ENCODE measurements at regions of chr14 and their contacts with region 1.

Region 1: GRCh38 chr14:102738756-102739494 is 38.3 kb upstream of the TRAF3 start:
- DNase-seq: no peak
- ATAC-seq: no peak
- H3K4me3 ChIP-seq: no peak overlapping the region
- H3K27ac ChIP-seq: no peak overlapping the region
- H3K4me1 ChIP-seq: no peaks in the 10 kb centered on the region
- H3K27me3 ChIP-seq: no peaks in the 10 kb centered on the region
- CTCF ChIP-seq: no peak

Region 2: GRCh38 chr14:102645746-102646440 is 93.0 kb before region 1 on chr14:
- CTCF ChIA-PET with region 1: no interaction called
- POLR2A ChIA-PET with region 1: interaction called, 11 read pairs
- intact Hi-C with region 1: no loop called
- DNase-seq: no peak
- ATAC-seq: no peak
- H3K4me3 ChIP-seq: no peak overlapping the region
- H3K27ac ChIP-seq: no peak overlapping the region
- H3K4me1 ChIP-seq: peaks cover 5% of the 10 kb centered on the region; the same call in 1 of the 2 replicates
- H3K27me3 ChIP-seq: no peaks in the 10 kb centered on the region
- CTCF ChIP-seq: no peak

Region 3: DNA sequence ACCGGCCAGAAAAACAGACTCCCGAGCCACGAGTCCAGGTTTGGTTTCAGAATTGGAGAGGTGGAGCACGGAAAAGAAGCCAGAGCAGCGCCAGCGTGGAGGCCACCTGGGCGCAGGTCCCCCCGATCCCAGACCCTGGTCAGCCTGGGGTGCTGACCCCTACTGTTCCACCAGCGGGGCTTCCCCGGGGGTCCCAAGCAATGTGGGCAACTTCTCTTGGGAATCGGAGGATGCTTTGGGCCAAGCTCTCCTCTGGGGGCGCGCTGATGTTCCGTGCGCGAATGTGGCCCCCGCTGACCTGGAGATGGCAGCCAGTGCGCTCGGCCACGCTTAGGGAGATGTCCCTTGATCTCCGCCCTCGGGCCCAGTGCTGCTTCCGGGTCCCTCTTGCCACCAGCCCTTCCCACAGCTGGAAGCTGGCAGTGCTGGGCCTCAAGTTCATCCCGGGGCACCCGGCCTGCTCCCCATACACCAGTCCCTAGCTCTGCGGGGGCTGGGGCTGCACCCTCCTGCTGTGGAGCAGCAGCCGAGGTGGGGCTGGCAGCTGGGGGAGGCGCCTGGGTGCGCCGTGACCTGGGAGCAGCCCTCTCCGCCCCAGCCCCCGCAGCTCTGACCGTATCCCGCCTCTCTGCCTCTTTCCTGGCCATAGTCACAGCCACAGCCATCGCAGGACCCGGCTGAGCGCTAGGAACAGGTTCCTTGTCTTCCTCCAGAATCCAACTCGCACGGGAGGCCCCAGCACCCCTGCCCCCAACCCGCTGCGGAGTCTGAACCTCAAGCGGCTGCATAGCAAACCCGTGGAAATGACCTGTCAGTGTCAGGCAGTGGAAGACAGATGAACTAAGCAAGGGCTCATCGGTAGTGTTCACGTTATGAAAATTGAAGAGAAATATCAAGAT is 55.3 kb before region 1 on chr14:
- CTCF ChIA-PET with region 1: no interaction called
- POLR2A ChIA-PET with region 1: no interaction called
- intact Hi-C with region 1: no loop called
- DNase-seq: no peak
- ATAC-seq: no peak
- H3K4me3 ChIP-seq: no peak overlapping the region
- H3K27ac ChIP-seq: no peak overlapping the region
- H3K4me1 ChIP-seq: no peaks in the 10 kb centered on the region
- H3K27me3 ChIP-seq: no peaks in the 10 kb centered on the region
- CTCF ChIP-seq: no peak

Region 4: GRCh38 chr14:102759456-102760187 is 20.7 kb after region 1 on chr14:
- CTCF ChIA-PET with region 1: interaction called, 11 read pairs
- POLR2A ChIA-PET with region 1: no interaction called
- intact Hi-C with region 1: no loop called
- DNase-seq: peak; percentile 20
- ATAC-seq: peak; percentile 37; the same call in 1 of the 2 replicates
- H3K4me3 ChIP-seq: no peak overlapping the region
- H3K27ac ChIP-seq: no peak overlapping the region
- H3K4me1 ChIP-seq: no peaks in the 10 kb centered on the region
- H3K27me3 ChIP-seq: no peaks in the 10 kb centered on the region
- CTCF ChIP-seq: no peak

Region 5: DNA sequence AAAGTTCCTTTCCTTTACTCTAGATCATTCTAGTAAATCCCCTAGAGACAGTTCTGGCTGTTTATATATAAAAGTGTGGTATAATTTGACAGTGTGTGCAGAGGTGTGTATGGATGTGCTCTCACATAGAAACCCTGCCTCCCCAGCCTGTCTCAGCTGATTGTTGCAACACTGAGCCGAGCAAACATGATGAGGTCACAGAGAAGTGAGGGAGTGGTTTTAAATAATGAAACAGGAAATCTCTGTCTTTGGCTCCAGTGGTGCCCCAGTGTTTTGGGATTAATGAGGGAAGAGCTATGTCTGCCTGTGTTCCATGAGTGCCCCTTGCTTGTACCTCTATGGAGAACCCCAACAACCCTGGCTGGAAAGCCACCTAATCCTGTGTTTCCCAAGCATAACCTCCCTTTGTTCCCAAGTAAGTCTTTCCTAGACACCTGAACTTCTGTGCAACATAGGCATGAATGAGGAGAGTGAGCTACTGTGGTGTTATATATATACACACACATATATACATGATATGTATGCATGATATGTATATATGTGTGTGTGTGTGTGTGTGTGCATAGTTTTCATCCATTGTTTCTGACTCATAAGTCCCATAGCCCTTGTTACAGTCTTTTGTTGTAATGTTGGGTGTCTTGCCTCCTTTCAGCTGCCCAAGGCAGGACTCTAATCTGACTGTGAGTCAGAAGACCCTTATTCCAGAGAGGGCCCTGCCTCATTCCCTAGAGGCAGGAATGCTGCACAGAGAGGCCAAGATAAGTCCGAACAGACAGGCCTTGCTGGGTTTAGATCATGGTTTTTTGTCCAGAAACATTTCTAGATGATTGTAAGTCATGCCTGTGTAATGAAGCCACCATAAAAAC is 56.4 kb after region 1 on chr14:
- CTCF ChIA-PET with region 1: no interaction called
- POLR2A ChIA-PET with region 1: no interaction called
- intact Hi-C with region 1: no loop called
- DNase-seq: peak; percentile 83
- ATAC-seq: peak; percentile 99
- H3K4me3 ChIP-seq: no peak overlapping the region
- H3K27ac ChIP-seq: peak overlapping the region; percentile 56
- H3K4me1 ChIP-seq: peaks cover 14% of the 10 kb centered on the region
- H3K27me3 ChIP-seq: no peaks in the 10 kb centered on the region
- CTCF ChIP-seq: no peak

Measured in PC-3 (cell line).